ENCODE measurements at regions of chr1 and their contacts with region 1.

Region 1: DNA sequence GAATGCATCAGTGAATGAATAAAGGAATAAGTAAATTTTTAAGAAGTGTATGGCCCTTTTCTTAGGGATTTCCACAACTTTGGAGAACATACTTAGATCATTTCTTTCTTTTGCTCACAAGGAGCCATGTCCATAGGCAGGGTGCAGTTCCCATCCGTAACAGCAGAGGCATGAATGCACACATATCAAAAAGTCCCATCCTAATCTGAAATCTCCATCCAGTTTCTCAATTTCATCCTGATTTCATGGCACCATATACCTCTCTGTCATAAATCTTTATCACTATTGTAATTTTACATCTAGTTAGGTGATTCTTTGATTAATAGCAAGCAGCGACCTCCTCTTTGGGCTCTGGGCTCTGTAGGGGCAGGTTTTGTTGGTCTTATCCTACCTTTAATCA is 359.2 kb downstream of the RRAGC start:
- DNase-seq: peak; percentile 26
- H3K4me3 ChIP-seq: no peak overlapping the region
- H3K27ac ChIP-seq: no peak overlapping the region
- H3K4me1 ChIP-seq: peaks cover 10% of the 10 kb centered on the region
- CTCF ChIP-seq: peak; percentile 68

Region 2: GRCh38 chr1:38046884-38047602 is 453.3 kb before region 1 on chr1:
- CTCF ChIA-PET with region 1: no interaction called
- POLR2A ChIA-PET with region 1: no interaction called
- intact Hi-C with region 1: loop called (anchors 10 kb)
- DNase-seq: peak; percentile 63
- H3K4me3 ChIP-seq: peak overlapping the region; percentile 60
- H3K27ac ChIP-seq: no peak overlapping the region
- H3K4me1 ChIP-seq: peaks cover under 1% of the 10 kb centered on the region
- CTCF ChIP-seq: no peak